ENCODE measurements at regions of chr4 and their contacts with region 1.

Region 1: DNA sequence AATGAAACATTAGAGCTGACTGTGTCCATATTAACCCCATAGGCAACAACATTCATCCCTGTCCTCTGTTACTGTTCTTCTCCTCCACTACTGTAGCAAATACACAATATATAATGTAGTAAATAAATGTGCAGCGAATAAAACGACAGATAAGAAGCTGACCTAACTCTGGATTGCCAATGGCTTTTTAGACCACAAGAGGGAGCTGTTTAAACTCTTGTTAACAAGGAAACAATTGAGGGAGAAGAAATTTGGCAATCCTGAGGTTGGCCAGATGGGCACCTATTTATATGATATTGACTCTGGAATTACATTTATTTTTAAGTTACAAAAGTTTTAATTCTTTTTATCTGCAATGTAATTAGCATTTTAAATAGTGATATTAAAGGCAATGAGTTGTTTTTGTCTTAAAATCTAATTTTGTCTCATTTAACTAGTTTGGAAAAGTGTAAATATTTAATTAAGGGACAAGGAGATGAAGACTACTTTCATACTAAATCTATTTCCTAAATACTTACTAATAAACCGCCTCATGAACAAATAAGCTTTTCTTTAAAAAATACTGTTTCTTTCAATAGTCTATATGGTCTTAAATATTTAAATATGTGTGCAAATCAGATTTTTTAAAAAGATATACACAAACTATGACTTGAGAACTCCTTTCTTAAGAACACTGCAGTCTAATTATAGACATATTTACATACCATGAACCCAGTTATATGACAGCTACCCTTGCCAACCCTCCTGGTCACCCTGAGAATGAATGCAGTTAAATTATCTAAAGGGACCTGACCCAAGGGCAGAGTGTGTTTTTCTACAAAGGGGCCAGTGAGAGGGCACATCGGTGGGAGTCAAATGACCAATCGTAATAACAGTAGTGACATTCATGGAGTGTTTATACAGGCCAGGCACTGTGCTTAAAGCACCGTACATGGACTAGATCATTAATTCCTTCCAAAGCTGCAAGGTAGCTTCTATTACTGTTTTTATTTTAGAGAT is 52.9 kb upstream of the HPF1 start:
- DNase-seq: peak; percentile 52
- H3K4me3 ChIP-seq: no peak overlapping the region
- H3K27ac ChIP-seq: no peak overlapping the region
- H3K27me3 ChIP-seq: no peaks in the 10 kb centered on the region
- CTCF ChIP-seq: peak; percentile 89

Region 2: GRCh38 chr4:169652535-169652934 is 158.1 kb before region 1 on chr4:
- CTCF ChIA-PET with region 1: interaction called, 10 read pairs
- POLR2A ChIA-PET with region 1: no interaction called
- DNase-seq: no peak
- H3K4me3 ChIP-seq: no peak overlapping the region
- H3K27ac ChIP-seq: no peak overlapping the region
- H3K27me3 ChIP-seq: no peaks in the 10 kb centered on the region
- CTCF ChIP-seq: no peak

Region 3: GRCh38 chr4:169800541-169800940 is 10.1 kb before region 1 on chr4:
- CTCF ChIA-PET with region 1: interaction called, 44 read pairs
- POLR2A ChIA-PET with region 1: no interaction called
- DNase-seq: no peak
- H3K4me3 ChIP-seq: no peak overlapping the region
- H3K27ac ChIP-seq: no peak overlapping the region
- H3K27me3 ChIP-seq: no peaks in the 10 kb centered on the region
- CTCF ChIP-seq: no peak

Region 4: GRCh38 chr4:170047771-170048354 is 237.2 kb after region 1 on chr4:
- CTCF ChIA-PET with region 1: interaction called, 152 read pairs
- POLR2A ChIA-PET with region 1: no interaction called
- DNase-seq: peak; percentile 49
- H3K4me3 ChIP-seq: no peak overlapping the region
- H3K27ac ChIP-seq: no peak overlapping the region
- H3K27me3 ChIP-seq: peaks cover 3% of the 10 kb centered on the region
- CTCF ChIP-seq: peak; percentile 80

Measured in AG04450 (cell line).